ENCODE measurements at regions of chr17 and their contacts with region 1.

Region 1: GRCh38 chr17:61389670-61390478 is 9.8 kb upstream of the TBX2 start:
- DNase-seq: no peak
- H3K4me3 Mint-ChIP-seq: no peak overlapping the region
- H3K27ac Mint-ChIP-seq: no peak overlapping the region
- H3K4me1 Mint-ChIP-seq: no peaks in the 10 kb centered on the region
- H3K27me3 Mint-ChIP-seq: peaks cover 15% of the 10 kb centered on the region

Region 2: DNA sequence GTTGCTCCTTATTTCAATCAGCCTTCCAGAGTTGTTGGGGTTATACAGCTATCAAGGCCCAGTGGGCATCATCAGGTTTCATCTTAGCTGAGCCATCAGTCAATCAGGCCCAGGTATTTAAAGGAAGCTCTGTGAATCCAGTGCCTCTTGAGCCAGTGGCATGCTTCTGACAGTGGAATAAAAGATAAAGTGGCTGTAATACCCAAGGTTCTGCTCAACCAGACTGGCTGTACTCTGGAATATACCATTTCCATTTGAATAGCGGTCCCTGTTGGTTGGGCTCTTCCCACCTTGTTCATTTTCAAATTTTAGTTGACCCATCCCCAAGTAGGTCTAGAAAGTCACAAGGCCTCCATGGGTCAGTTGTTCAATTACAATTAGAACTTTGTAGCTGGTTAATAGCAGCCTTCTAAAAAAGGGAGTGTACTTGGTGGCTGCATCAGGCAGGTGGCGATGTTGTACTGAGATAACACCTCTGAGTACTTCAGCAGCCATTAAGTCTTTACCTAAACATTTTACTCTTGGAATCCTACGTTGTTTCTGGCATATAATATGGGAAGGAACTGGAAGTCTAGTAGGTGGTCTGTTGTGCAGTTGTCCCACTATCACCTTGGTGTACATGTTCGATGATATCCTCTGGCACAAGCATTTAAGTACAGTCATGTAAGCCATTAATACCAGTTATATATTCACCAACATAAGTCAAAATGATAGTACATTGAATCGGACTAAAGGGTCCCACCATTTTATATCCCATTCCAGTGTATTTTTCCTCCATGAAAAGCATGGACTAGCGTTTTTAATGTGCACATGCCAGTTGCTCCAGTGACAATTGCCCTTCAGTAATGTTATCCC is 418.1 kb before region 1 on chr17:
- intact Hi-C with region 1: loop called (anchors 1 kb)
- DNase-seq: no peak
- H3K4me3 Mint-ChIP-seq: no peak overlapping the region
- H3K27ac Mint-ChIP-seq: no peak overlapping the region
- H3K4me1 Mint-ChIP-seq: no peaks in the 10 kb centered on the region
- H3K27me3 Mint-ChIP-seq: peaks cover 16% of the 10 kb centered on the region

Region 3: GRCh38 chr17:61002316-61002736 is 387.5 kb before region 1 on chr17:
- intact Hi-C with region 1: loop called (anchors 2 kb)
- DNase-seq: no peak
- H3K4me3 Mint-ChIP-seq: no peak overlapping the region
- H3K27ac Mint-ChIP-seq: no peak overlapping the region
- H3K4me1 Mint-ChIP-seq: no peaks in the 10 kb centered on the region
- H3K27me3 Mint-ChIP-seq: peaks cover 11% of the 10 kb centered on the region

Region 4: GRCh38 chr17:61349350-61349749 is 40.5 kb before region 1 on chr17:
- intact Hi-C with region 1: no loop called
- DNase-seq: no peak
- H3K4me3 Mint-ChIP-seq: no peak overlapping the region
- H3K27ac Mint-ChIP-seq: no peak overlapping the region
- H3K4me1 Mint-ChIP-seq: no peaks in the 10 kb centered on the region
- H3K27me3 Mint-ChIP-seq: no peaks in the 10 kb centered on the region

Measured in activated T-helper 2 cell treated with anti-CD3 and anti-CD28 coated beads, Interferon-gamma antibody, Interleukin-2, Interleukin-4, amounts not matched to agents 10 μg/mL and 5 μg/mL and 100 μg/mL, durations not matched to agents 14 hours and 24 hours and 36 hours (primary cell).